Gastrocnemius medialis (tissue), 4 donors: ENCODE measurements at regions of chr2 and their contacts with region 1.

Region 1: GRCh38 chr2:241489733-241490680 is 18.4 kb downstream of the STK25 start:
- DNase-seq: no peak
- ATAC-seq: no peak
- H3K4me3 ChIP-seq: no peak overlapping the region
- H3K27ac ChIP-seq: no peak overlapping the region
- H3K4me1 ChIP-seq: no peaks in the 10 kb centered on the region
- H3K27me3 ChIP-seq: no peaks in the 10 kb centered on the region
- CTCF ChIP-seq: no peak
- POLR2A ChIP-seq: no peak

Region 2: DNA sequence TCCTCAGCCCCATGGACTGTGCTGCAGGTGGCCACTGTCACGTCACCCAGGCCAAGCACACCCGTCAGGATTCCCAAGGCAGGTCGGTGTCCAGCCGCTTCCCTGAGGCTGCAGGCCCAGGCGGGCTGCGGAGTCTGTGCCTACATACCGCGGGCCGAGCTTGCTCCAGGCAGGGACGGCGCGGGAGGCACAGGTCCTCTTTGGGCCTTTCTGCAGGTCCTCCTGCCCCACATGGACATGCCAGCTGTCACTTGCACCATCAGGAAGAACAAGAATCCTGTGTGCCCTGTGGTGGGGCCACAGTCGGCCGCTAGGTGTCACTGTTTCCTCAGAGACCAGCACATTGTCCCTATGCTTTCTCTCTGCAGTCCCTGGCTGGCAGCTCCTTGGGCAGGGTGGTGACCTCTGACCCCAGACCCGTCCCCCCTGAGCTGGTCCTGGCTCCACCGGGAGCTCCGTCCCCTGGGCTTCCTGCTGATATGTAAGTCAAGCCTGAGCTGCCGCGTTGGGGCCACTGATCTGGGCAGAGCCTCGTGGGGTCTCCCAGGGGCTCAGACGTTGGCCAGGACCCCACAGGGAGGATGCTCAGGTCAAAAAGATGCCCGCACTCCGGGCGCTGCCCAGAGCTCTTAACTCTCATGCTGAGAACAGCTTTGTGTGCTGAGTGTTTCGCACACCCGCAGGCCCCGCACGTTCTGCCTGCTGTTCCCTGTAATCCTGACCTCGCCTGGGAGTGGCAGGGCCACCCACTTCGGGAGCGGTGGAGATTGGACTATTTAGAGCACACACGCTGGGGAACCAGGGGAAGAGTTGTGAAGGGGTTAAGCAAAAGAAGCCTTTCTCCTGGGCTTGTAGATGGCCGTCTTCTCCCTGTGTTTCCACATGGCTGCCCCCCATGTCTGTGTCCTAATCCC is 638.7 kb before region 1 on chr2:
- in situ Hi-C with region 1: no loop called
- intact Hi-C with region 1: no loop called
- DNase-seq: peak; percentile 56 to 80
- ATAC-seq: peak; percentile 93 to 99
- H3K4me3 ChIP-seq: no peak overlapping the region
- H3K27ac ChIP-seq: no peak overlapping the region
- H3K4me1 ChIP-seq: no peaks in the 10 kb centered on the region
- H3K27me3 ChIP-seq: no peaks in the 10 kb centered on the region
- CTCF ChIP-seq: peak; percentile 77 to 96 (median 93)
- POLR2A ChIP-seq: no peak

Region 3: DNA sequence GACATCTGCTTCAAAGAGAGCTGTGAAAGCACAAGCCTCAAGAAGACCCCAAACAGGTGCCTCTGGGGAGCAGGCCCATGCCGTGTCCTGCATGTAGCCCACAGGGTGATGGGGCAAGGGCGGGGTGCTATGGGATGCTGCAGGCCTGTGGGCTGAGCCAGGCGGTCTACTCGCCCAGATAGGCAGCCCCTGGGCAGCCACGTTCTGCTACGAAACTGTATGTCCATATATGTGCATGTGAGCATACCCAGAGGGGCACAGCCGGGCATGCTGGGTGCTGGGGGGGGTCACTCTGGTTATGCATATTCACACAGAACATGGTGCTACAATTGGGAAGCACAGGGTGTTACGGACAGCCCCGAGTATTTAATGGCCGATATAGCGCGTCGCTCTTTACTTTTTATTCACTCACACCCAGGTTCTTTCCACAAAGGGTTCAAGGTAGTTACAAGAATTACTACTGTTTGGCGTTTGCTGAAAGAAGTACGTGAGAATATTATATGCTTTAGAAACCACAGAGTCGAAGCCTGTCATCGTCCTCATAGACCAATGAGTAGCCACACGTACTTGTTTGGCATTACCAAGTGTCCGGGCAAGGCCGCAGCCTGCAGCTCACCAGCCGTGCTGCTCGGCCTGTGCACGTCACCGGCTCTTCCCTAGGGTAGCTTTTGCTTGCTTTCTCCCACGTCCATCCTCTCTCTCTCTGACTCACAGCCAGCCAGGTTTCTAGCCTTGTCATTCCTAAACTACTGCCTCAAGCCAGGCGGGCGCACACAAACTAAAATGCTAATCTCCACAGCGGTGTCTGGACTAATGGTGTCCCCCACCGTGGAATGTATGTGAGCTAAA is 402.4 kb before region 1 on chr2:
- in situ Hi-C with region 1: no loop called
- intact Hi-C with region 1: loop called (anchors 10 kb)
- DNase-seq: no peak
- ATAC-seq: no peak
- H3K4me3 ChIP-seq: no peak overlapping the region
- H3K27ac ChIP-seq: no peak overlapping the region
- H3K4me1 ChIP-seq: peaks cover 0 to 5% of the 10 kb centered on the region in 2 donors
- H3K27me3 ChIP-seq: no peaks in the 10 kb centered on the region
- CTCF ChIP-seq: no peak
- POLR2A ChIP-seq: no peak